ENCODE measurements at regions of chr19 and their contacts with region 1.

Region 1: DNA sequence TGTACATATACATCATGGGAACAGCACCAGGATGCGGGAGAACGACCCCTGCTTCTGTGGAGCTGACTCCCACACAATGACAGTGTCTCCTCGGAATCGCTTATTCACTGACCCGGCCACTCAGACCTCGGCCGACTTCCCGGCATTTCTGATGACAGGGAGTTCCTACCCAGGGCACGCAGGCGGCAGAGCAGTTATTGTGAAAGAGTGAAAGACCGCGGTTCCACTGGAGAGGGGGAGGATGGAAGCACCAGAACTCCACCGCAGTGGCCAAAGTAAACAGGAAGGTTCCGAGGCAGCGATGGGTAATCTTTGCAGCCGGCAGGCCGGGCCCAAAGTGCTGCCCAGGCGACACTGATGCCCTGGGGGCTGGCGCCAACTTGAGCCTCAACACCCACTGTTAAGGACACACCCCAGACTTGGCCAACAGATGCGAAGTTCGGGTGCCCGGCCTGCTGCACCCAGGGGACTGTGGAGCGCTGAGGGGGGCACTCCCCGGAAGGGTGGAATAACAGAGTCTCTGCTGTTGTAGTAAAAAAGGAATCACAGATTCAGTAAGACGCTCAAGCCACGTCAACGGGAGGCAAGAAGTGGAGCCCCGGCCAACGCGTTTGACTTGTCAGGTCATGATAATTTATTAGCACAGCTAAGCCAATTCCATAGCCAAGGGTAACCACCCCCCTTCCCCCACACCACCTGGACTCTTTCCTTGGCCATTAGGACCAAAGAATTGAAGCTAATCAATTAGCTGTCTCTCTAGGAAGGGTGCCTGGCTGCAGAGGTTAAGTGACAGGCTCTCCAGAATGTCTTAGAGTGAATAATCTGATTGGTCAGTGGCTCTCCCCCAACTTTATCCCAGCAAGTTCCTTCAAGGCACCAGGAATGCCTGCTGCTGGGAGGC is 5.8 kb downstream of the MLLT1 start:
- DNase-seq: peak; percentile 95
- H3K4me3 ChIP-seq: peak overlapping the region in 3 of 4 donors; percentile 23 to 28 (median 24)
- H3K27ac ChIP-seq: peak overlapping the region; percentile 84 to 92 (median 88)
- H3K4me1 ChIP-seq: peaks cover 0 to 99% (median 96%) of the 10 kb centered on the region in 4 donors
- H3K27me3 ChIP-seq: no peaks in the 10 kb centered on the region
- CTCF ChIP-seq: no peak
- EP300 ChIP-seq: peak in 2 of 4 donors; percentile 21 to 65
- POLR2A ChIP-seq: no peak

Region 2: GRCh38 chr19:6056801-6057650 is 216.9 kb before region 1 on chr19:
- intact Hi-C with region 1: loop called (anchors 5 kb)
- DNase-seq: peak; percentile 94
- H3K4me3 ChIP-seq: peak overlapping the region in 3 of 4 donors; percentile 11 to 32 (median 29)
- H3K27ac ChIP-seq: peak overlapping the region; percentile 91 to 95 (median 92)
- H3K4me1 ChIP-seq: peaks cover 0 to 75% (median 67%) of the 10 kb centered on the region in 4 donors
- H3K27me3 ChIP-seq: no peaks in the 10 kb centered on the region
- CTCF ChIP-seq: no peak
- EP300 ChIP-seq: peak in 2 of 4 donors; percentile 24 to 83
- POLR2A ChIP-seq: peak in 1 of 2 donors; percentile 63

Region 3: GRCh38 chr19:6108721-6109633 is 165.0 kb before region 1 on chr19:
- intact Hi-C with region 1: loop called (anchors 5 kb)
- DNase-seq: peak; percentile 90
- H3K4me3 ChIP-seq: peak overlapping the region; percentile 46 to 92 (median 82)
- H3K27ac ChIP-seq: peak overlapping the region; percentile 89 to 94 (median 92)
- H3K4me1 ChIP-seq: peaks cover 0 to 39% (median 35%) of the 10 kb centered on the region in 4 donors
- H3K27me3 ChIP-seq: no peaks in the 10 kb centered on the region
- CTCF ChIP-seq: peak in 1 of 4 experiments; percentile 28
- EP300 ChIP-seq: no peak
- POLR2A ChIP-seq: peak; percentile 41 to 52

Region 4: GRCh38 chr19:6204826-6205735 is 68.9 kb before region 1 on chr19:
- intact Hi-C with region 1: no loop called
- DNase-seq: peak; percentile 57
- H3K4me3 ChIP-seq: no peak overlapping the region
- H3K27ac ChIP-seq: no peak overlapping the region
- H3K4me1 ChIP-seq: peaks cover 0 to 1% (median under 1%) of the 10 kb centered on the region in 4 donors
- H3K27me3 ChIP-seq: no peaks in the 10 kb centered on the region
- CTCF ChIP-seq: no peak
- EP300 ChIP-seq: no peak
- POLR2A ChIP-seq: no peak

Region 5: GRCh38 chr19:6218491-6219162 is 55.3 kb before region 1 on chr19:
- intact Hi-C with region 1: loop called (anchors 5 kb)
- DNase-seq: peak; percentile 95
- H3K4me3 ChIP-seq: no peak overlapping the region
- H3K27ac ChIP-seq: peak overlapping the region; percentile 7 to 65 (median 55)
- H3K4me1 ChIP-seq: peaks cover 0 to 50% (median 40%) of the 10 kb centered on the region in 4 donors
- H3K27me3 ChIP-seq: no peaks in the 10 kb centered on the region
- CTCF ChIP-seq: peak; percentile 98 to 100 (median 99)
- EP300 ChIP-seq: no peak
- POLR2A ChIP-seq: no peak

Measured in sigmoid colon (tissue), 7 donors.